Activated CD8-positive, alpha-beta T cell treated with anti-CD3 and anti-CD28 coated beads for 36 hours (primary cell): ENCODE measurements at regions of chr17 and their contacts with region 1.

Region 1: GRCh38 chr17:14427900-14428647 is 127.2 kb downstream of the HS3ST3B1 start:
- DNase-seq: peak; percentile 77
- ATAC-seq: peak; percentile 96
- H3K4me3 Mint-ChIP-seq: peak overlapping the region; percentile 60
- H3K27ac Mint-ChIP-seq: peak overlapping the region; percentile 90
- H3K4me1 Mint-ChIP-seq: peaks cover 58% of the 10 kb centered on the region
- H3K27me3 Mint-ChIP-seq: no peaks in the 10 kb centered on the region
- CTCF ChIP-seq: no peak

Region 2: DNA sequence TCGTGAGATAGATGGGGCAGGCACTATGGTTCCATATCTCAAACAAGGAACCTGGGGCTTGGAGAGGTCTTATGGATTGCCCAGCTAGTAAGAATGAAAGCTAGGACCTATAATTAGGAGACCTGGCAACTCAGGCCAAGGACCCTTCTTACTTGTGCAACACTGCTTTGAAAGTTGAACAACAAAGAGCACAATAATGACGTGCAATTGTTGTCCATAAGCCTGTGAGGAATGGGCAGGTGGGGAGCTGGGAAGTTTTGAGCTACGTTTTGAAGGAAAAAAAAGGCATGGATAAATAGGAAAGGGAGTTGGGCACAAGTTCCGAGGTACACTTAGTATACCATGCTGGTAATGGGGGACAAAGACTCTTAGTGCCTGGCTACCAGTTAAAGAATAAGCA is 22.9 kb before region 1 on chr17:
- CTCF ChIA-PET with region 1: interaction called, 14 read pairs
- POLR2A ChIA-PET with region 1: interaction called, 8 read pairs
- intact Hi-C with region 1: no loop called
- DNase-seq: no peak
- ATAC-seq: no peak
- H3K4me3 Mint-ChIP-seq: no peak overlapping the region
- H3K27ac Mint-ChIP-seq: no peak overlapping the region
- H3K4me1 Mint-ChIP-seq: peaks cover 25% of the 10 kb centered on the region
- H3K27me3 Mint-ChIP-seq: no peaks in the 10 kb centered on the region
- CTCF ChIP-seq: no peak